Dorsolateral prefrontal cortex (tissue), 120 donors: ENCODE measurements at regions of chr11 and their contacts with region 1.

Region 1: GRCh38 chr11:11798586-11799438 is 43.0 kb upstream of the USP47 start:
- DNase-seq: peak; percentile 78 to 95 (median 87)
- H3K4me3 ChIP-seq: peak overlapping the region in 7 of 59 donors; percentile 1 to 29 (median 16)
- H3K27ac ChIP-seq: peak overlapping the region in 4 of 59 donors; percentile 1 to 49 (median 26)
- H3K27me3 ChIP-seq: no peaks in the 10 kb centered on the region
- CTCF ChIP-seq: peak in 55 of 56 donors; percentile 55 to 99 (median 95)

Region 2: GRCh38 chr11:11841723-11842420 is 43.1 kb after region 1 on chr11 and contains the start of gene USP47:
- intact Hi-C with region 1: loop called in 1 of 2 experiments (anchors 2 kb)
- DNase-seq: peak; percentile 73 to 90 (median 86)
- H3K4me3 ChIP-seq: peak within 1 kb of the TSS; percentile 56 to 93 (median 82)
- H3K27ac ChIP-seq: peak within 1 kb of the TSS; percentile 89 to 100 (median 99)
- H3K27me3 ChIP-seq: no peaks in the 10 kb centered on the region
- CTCF ChIP-seq: peak in 54 of 56 donors; percentile 18 to 82 (median 66)
- total RNA-seq, gene USP47: 49.7 to 92.3 (median 69.2) TPM

Region 3: GRCh38 chr11:11848891-11849746 is 50.3 kb after region 1 on chr11:
- intact Hi-C with region 1: loop called in 1 of 2 experiments (anchors 2 kb)
- DNase-seq: peak in 6 of 10 donors; percentile 17 to 58 (median 42)
- H3K4me3 ChIP-seq: peak overlapping the region in 1 of 59 donors; percentile 3
- H3K27ac ChIP-seq: peak overlapping the region in 34 of 59 donors; percentile 0 to 70 (median 26)
- H3K27me3 ChIP-seq: no peaks in the 10 kb centered on the region
- CTCF ChIP-seq: peak in 55 of 56 donors; percentile 35 to 77 (median 56)

Region 4: GRCh38 chr11:11923828-11924227 is 125.0 kb after region 1 on chr11:
- intact Hi-C with region 1: loop called in 1 of 2 experiments (anchors 10 kb)
- DNase-seq: no peak
- H3K4me3 ChIP-seq: no peak overlapping the region
- H3K27ac ChIP-seq: peak overlapping the region in 19 of 59 donors; percentile 1 to 58 (median 21)
- H3K27me3 ChIP-seq: no peaks in the 10 kb centered on the region
- CTCF ChIP-seq: no peak

Region 5: GRCh38 chr11:11946180-11946579 is 147.4 kb after region 1 on chr11:
- intact Hi-C with region 1: no loop called
- DNase-seq: no peak
- H3K4me3 ChIP-seq: no peak overlapping the region
- H3K27ac ChIP-seq: no peak overlapping the region
- H3K27me3 ChIP-seq: no peaks in the 10 kb centered on the region
- CTCF ChIP-seq: no peak

Region 6: GRCh38 chr11:11966826-11967668 is 168.2 kb after region 1 on chr11:
- intact Hi-C with region 1: loop called in 1 of 2 experiments (anchors 2 kb)
- DNase-seq: peak; percentile 65 to 89 (median 82)
- H3K4me3 ChIP-seq: no peak overlapping the region
- H3K27ac ChIP-seq: peak overlapping the region in 41 of 59 donors; percentile 0 to 93 (median 63)
- H3K27me3 ChIP-seq: no peaks in the 10 kb centered on the region
- CTCF ChIP-seq: peak; percentile 40 to 86 (median 76)